HEK293 (cell line): ENCODE measurements at regions of chr4 and their contacts with region 1.

Region 1: DNA sequence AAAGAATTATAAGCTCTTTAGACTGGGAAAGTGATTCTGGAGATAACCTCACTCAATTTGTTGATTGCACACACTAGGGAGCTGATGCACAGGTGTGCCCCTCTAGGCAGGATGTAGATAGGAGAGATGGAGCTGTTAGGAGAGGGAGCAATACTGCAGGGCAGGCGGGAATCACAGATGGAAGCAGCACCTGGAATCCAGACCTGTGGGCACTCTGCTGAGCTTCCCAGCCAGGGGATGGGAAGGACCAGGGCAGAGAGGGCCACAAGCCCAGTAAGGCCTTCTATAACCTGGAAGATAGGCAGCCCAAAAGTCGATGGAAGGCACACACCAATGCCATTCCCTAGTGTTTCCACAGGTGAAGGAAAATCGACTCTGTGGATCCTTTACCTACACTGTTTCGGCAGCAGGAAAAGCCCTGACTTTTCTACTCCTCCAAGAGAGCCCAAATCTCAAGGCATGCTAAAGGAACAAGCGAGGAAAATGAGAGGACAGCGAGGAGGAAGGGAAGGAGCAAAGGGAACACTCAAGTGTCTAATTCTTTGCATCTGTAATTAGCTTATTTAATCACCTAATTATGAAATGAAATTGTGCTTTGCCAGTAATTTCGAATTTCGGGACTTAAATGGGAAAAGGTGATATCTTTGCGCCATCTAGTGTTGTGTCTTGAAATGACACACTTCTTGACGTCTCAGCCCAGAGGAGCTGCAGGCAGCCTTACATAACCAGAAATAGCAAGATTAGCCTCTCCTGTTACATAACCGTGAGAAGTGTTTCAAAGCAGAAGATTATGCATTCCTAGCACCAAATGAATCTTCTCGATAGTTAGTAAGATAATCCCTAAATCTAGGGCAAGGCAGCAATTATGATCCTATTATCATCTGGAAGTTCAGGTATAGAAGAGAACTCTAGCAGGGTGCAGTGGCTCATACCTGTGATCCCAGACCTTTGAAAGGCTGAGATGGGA is 31.0 kb upstream of the TLR3 start:
- H3K4me3 ChIP-seq: no peak overlapping the region
- H3K27ac ChIP-seq: no peak overlapping the region
- H3K4me1 ChIP-seq: no peaks in the 10 kb centered on the region
- CTCF ChIP-seq: 0 out of 2 replicates have a peak, but pooled peaks have one; percentile 34

Region 2: GRCh38 chr4:185597532-185598188 is 440.3 kb before region 1 on chr4:
- CTCF ChIA-PET with region 1: interaction called, 16 read pairs
- POLR2A ChIA-PET with region 1: no interaction called
- H3K4me3 ChIP-seq: no peak overlapping the region
- H3K27ac ChIP-seq: no peak overlapping the region
- H3K4me1 ChIP-seq: no peaks in the 10 kb centered on the region
- CTCF ChIP-seq: peak; percentile 53; the same call in 1 of the 2 replicates

Region 3: GRCh38 chr4:185640811-185641675 is 396.9 kb before region 1 on chr4:
- CTCF ChIA-PET with region 1: interaction called, 12 read pairs
- POLR2A ChIA-PET with region 1: no interaction called
- H3K4me3 ChIP-seq: no peak overlapping the region
- H3K27ac ChIP-seq: no peak overlapping the region
- H3K4me1 ChIP-seq: no peaks in the 10 kb centered on the region
- CTCF ChIP-seq: no peak

Region 4: GRCh38 chr4:186021461-186022167 is 16.4 kb before region 1 on chr4:
- CTCF ChIA-PET with region 1: interaction called, 13 read pairs
- POLR2A ChIA-PET with region 1: no interaction called
- H3K4me3 ChIP-seq: no peak overlapping the region
- H3K27ac ChIP-seq: no peak overlapping the region
- H3K4me1 ChIP-seq: no peaks in the 10 kb centered on the region
- CTCF ChIP-seq: peak; percentile 79

Region 5: GRCh38 chr4:186137196-186137794 is 99.3 kb after region 1 on chr4:
- CTCF ChIA-PET with region 1: interaction called, 15 read pairs
- POLR2A ChIA-PET with region 1: no interaction called
- H3K4me3 ChIP-seq: no peak overlapping the region
- H3K27ac ChIP-seq: no peak overlapping the region
- H3K4me1 ChIP-seq: no peaks in the 10 kb centered on the region
- CTCF ChIP-seq: no peak